Lower leg skin (tissue), 4 donors: ENCODE measurements at regions of chr15 and their contacts with region 1.

Region 1: GRCh38 chr15:42286445-42287029 is 13.3 kb upstream of the TMEM87A start:
- DNase-seq: no peak
- H3K4me3 ChIP-seq: no peak overlapping the region
- CTCF ChIP-seq: no peak
- POLR2A ChIP-seq: no peak

Region 2: GRCh38 chr15:41980654-41981323 is 305.7 kb before region 1 on chr15:
- intact Hi-C with region 1: loop called (anchors 5 kb)
- DNase-seq: peak in 1 of 2 donors; percentile 77
- H3K4me3 ChIP-seq: no peak overlapping the region
- CTCF ChIP-seq: no peak
- POLR2A ChIP-seq: no peak

Region 3: GRCh38 chr15:42133886-42134502 is 152.5 kb before region 1 on chr15:
- intact Hi-C with region 1: no loop called
- DNase-seq: peak; percentile 17 to 86
- H3K4me3 ChIP-seq: no peak overlapping the region
- CTCF ChIP-seq: peak in 1 of 3 donors; percentile 29
- POLR2A ChIP-seq: no peak

Region 4: DNA sequence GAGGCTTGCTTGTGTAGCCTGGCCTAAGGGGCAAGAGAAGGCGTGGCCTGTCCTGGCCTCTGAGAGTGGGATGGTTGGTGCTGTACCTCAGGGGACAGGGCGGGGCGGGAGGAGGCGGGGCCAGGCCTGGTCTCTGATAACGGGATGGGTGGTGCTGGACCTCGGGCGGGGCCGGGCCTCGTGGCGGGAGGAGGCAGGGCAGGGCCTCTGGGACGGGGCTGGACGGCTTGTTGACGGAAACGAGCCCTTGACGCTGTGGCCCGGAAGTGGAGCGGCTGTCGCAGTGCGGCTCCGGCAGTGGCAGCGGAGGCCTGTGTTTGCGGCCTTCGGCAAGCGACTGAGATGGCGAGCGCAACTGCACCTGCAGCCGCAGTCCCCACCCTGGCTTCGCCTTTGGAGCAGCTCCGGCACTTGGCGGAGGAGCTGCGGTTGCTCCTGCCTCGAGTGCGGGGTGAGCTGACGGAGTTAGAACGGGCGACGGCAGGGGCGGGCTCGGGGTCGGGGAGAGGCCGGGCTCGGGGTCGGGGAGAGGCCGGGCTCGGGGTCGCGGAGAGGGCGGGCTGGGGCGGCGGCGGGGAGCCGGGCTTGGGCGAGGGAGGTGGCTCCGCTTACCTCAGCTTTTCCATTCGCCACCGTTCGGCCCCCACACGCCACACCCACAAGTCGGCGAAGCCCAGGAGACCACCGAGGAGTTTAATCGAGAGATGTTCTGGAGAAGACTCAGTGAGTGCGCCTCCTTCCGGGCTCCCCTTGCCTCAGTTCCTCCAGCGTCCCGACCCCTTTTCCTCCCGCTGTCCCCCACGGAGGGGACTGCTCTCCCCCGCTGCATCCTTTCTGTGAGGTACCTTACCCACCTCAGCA is 898.9 kb after region 1 on chr15 and contains the start of gene CCNDBP1:
- intact Hi-C with region 1: no loop called
- DNase-seq: peak; percentile 93 to 99
- H3K4me3 ChIP-seq: peak within 1 kb of the TSS; percentile 86
- CTCF ChIP-seq: no peak
- POLR2A ChIP-seq: peak in 1 of 2 donors; percentile 70
- total RNA-seq, gene CCNDBP1: 74.9 to 166 (median 114) TPM